Activated CD8-positive, alpha-beta memory T cell treated with anti-CD3 and anti-CD28 coated beads, Interleukin-2, amount 10 ng/mL, durations not matched to agents 7 days and 5 days (primary cell): ENCODE measurements at regions of chr13 and their contacts with region 1.

Region 1: DNA sequence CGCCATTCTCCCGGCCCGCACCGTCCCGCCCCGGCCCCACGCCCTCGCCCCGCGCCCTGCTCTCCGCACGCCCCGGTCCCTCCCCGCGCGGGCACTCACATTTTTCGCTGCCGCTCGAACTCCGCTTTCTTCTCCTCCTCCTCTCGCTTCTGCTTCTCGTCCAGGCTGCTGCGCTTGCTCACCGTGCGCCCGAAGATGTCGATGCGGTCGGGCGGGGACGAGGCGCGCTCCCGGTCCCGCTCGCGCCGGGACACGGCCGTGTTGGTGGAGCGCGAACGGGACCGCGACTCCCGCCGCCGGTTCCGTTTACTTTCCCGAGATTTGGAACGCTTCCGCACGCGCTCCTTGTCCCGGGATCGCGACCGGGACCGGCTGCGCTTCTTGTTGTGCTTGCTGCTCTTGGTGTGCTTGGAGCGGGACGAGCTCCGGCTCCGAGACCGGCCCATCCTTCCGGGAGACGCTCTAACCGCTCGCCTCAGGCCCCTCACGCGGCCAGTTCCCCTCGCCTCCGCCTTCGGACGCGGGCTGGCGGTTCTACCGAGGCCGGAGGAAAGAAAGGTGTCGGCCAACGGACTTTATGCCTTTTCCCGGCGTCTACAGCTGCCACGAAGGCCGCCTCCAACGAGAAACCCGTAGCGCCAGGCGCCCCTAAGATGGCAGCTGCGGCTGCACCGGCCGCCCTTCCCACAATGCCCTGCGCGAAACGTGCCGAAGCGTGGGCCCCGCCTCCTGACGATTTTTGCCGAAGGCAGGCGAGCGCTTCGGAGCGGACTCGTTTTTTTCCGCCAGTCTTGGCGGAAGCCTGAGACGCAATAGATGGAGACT is at the start of gene ARGLU1:
- DNase-seq: peak; percentile 95
- ATAC-seq: peak; percentile 83
- H3K4me3 Mint-ChIP-seq: peak within 1 kb of the TSS; percentile 98
- H3K27ac Mint-ChIP-seq: peak within 1 kb of the TSS; percentile 94
- H3K4me1 Mint-ChIP-seq: peaks cover 40% of the 10 kb centered on the region
- H3K27me3 Mint-ChIP-seq: no peaks in the 10 kb centered on the region
- total RNA-seq, gene ARGLU1: 111 to 138 TPM

Region 2: GRCh38 chr13:106372199-106373155 is 195.2 kb before region 1 on chr13:
- CTCF ChIA-PET with region 1: no interaction called
- DNase-seq: no peak
- ATAC-seq: no peak
- H3K4me3 Mint-ChIP-seq: no peak overlapping the region
- H3K27ac Mint-ChIP-seq: no peak overlapping the region
- H3K4me1 Mint-ChIP-seq: no peaks in the 10 kb centered on the region
- H3K27me3 Mint-ChIP-seq: peaks cover 7% of the 10 kb centered on the region

Region 3: GRCh38 chr13:106536244-106537034 is 31.2 kb before region 1 on chr13:
- CTCF ChIA-PET with region 1: interaction called, 36 read pairs
- DNase-seq: peak; percentile 87
- ATAC-seq: peak; percentile 31
- H3K4me3 Mint-ChIP-seq: peak overlapping the region; percentile 83
- H3K27ac Mint-ChIP-seq: peak overlapping the region; percentile 67
- H3K4me1 Mint-ChIP-seq: peaks cover 14% of the 10 kb centered on the region
- H3K27me3 Mint-ChIP-seq: peaks cover 30% of the 10 kb centered on the region

Region 4: DNA sequence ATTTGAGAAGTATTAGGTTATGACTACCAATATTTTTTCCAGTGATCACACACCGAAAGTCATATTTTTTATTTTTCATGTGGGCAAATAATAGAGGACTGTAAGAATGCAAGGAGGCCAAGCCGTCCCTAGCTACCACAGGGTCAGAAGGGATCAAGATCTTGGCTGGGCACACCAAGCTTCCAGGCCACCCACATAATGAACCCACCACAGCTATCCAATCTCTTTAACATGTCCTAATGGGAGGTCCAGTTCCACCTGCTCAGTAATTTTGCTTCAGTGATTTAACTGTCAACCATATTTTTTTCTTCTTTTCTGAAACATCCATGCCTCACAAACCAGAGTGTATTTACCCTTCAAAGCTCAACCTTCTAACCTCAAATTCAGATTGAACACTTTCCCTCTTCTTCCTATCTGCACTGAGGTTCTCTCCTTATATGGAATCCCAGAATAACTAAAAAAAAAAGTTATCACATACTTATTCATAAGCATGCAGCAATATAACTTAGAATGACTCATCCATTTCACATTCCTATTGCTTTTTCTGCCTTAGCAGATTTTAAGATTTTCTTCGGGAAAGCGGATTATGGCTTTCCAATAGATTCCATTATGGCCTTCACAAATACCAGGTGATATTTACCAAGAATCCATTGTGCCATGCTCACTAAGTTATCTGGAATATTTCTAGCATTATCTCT is 11.9 kb before region 1 on chr13:
- CTCF ChIA-PET with region 1: no interaction called
- DNase-seq: no peak
- ATAC-seq: no peak
- H3K4me3 Mint-ChIP-seq: no peak overlapping the region
- H3K27ac Mint-ChIP-seq: no peak overlapping the region
- H3K4me1 Mint-ChIP-seq: peaks cover 37% of the 10 kb centered on the region
- H3K27me3 Mint-ChIP-seq: no peaks in the 10 kb centered on the region

Region 5: DNA sequence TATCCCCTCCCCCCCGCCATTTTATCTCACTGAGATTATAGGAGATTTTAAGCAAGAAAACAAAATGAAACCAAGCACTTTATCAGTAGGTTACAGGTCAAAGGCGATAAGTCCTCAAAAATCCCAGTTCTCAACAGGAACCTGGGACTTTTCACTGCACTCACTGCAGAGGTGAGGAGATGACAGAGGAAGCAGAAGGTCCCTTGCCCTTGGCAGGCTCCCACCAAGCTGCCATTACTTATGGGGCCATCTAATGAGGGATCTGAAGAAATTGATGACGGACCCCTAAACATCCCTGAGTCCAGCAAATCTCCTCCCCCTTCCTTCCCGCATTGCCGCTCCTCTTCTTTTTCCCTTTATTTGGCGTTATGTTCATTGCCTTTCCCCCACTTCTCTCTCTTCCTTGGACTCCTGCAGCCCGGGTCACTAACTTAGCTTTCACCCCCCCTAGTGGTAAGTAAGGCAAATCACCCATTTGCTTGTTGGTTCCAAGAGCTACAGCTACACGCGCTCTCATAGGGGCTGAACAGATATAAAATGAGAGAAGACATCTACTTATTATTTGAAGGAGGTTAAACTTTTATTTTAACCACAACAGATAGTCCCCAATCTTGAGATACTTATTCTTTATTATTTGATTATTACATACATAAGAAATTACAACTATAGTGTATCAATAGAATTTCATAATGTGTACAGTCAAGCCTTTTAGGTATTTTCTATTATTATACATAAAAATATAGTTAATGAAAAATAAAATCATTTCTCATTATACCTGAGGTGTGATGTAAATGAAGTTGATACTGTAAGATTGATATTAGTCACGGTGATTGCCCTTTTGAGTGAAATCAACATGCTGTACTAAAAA is 52.2 kb after region 1 on chr13:
- CTCF ChIA-PET with region 1: interaction called, 12 read pairs
- DNase-seq: peak; percentile 43
- ATAC-seq: peak; percentile 76
- H3K4me3 Mint-ChIP-seq: no peak overlapping the region
- H3K27ac Mint-ChIP-seq: no peak overlapping the region
- H3K4me1 Mint-ChIP-seq: peaks cover 4% of the 10 kb centered on the region
- H3K27me3 Mint-ChIP-seq: peaks cover 39% of the 10 kb centered on the region

Region 6: GRCh38 chr13:106772006-106772601 is 204.4 kb after region 1 on chr13:
- CTCF ChIA-PET with region 1: no interaction called
- DNase-seq: no peak
- ATAC-seq: no peak
- H3K4me3 Mint-ChIP-seq: no peak overlapping the region
- H3K27ac Mint-ChIP-seq: no peak overlapping the region
- H3K4me1 Mint-ChIP-seq: no peaks in the 10 kb centered on the region
- H3K27me3 Mint-ChIP-seq: no peaks in the 10 kb centered on the region